CD4-positive, alpha-beta T cell (primary cell): ENCODE measurements at regions of chr1 and their contacts with region 1.

Region 1: GRCh38 chr1:182604169-182605164 is at the start of gene RGS16:
- DNase-seq: peak; percentile 77 to 96 (median 90)
- ATAC-seq: peak; percentile 88
- H3K4me3 ChIP-seq: peak within 1 kb of the TSS; percentile 58
- H3K4me3 Mint-ChIP-seq: peak within 1 kb of the TSS; percentile 83
- H3K27ac ChIP-seq: no peak within 1 kb of the TSS
- H3K27ac Mint-ChIP-seq: no peak within 1 kb of the TSS
- H3K4me1 ChIP-seq: peaks cover 36% of the 10 kb centered on the region
- H3K4me1 Mint-ChIP-seq: no peaks in the 10 kb centered on the region
- H3K27me3 ChIP-seq: no peaks in the 10 kb centered on the region
- H3K27me3 Mint-ChIP-seq: peaks cover 16% of the 10 kb centered on the region
- CTCF ChIP-seq: no peak
- total RNA-seq, gene RGS16: 16.3 to 16.4 TPM

Region 2: DNA sequence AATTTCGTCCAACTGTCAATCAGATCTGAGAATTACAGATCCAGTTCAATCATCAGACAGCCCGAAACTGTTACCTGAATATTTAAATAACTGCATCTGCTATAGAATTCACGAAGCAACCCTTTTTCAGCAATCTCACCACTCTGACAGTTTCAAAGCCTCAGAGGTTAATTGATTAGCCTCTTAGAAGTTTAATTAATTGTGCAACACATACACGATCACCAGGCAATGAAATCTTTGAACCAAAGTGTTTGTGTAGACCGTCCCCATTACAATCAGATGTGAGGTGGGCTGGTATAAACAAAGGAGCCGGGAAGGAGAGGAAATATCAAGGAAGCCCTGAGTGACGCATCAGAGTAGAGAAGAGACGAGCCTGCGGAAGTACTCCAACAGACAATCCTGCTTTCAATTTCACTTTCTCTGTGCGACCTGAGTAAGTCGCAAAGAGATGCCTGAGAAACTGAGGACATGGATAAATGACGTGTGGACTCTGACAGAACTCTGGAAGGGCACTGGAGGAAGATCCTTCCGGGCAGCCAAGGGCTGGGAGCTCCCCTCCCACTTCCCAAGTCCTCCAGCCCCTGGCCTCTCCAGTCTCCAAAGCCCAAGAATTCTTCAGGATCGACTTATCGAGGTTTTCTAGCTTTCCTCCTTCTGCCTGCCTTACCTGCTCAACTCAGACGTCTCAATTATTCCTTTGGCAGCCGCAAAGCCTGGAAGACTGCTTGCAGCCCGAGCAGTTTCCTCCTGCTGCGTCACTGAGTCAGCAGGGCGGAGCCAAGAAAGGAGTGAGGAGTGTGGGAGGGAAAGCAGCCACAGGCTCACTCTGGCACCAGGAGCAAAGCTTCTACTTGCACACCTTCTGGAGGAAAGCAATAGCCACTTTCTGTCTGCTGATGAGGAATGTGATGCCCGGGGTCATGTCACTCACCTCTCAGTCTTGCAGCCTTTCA is 15.7 kb before region 1 on chr1 and contains the start of gene RNASEL:
- CTCF ChIA-PET with region 1: interaction called, 13 read pairs
- POLR2A ChIA-PET with region 1: interaction called, 38 read pairs
- intact Hi-C with region 1: no loop called
- DNase-seq: peak; percentile 28 to 85 (median 54)
- ATAC-seq: peak; percentile 85
- H3K4me3 ChIP-seq: peak within 1 kb of the TSS; percentile 83
- H3K4me3 Mint-ChIP-seq: peak within 1 kb of the TSS; percentile 95
- H3K27ac ChIP-seq: peak within 1 kb of the TSS; percentile 89 to 97
- H3K27ac Mint-ChIP-seq: peak within 1 kb of the TSS; percentile 99
- H3K4me1 ChIP-seq: peaks cover 28% of the 10 kb centered on the region
- H3K4me1 Mint-ChIP-seq: peaks cover 52% of the 10 kb centered on the region
- H3K27me3 ChIP-seq: no peaks in the 10 kb centered on the region
- H3K27me3 Mint-ChIP-seq: no peaks in the 10 kb centered on the region
- CTCF ChIP-seq: no peak
- total RNA-seq, gene RNASEL: 3.5 to 3.7 TPM

Region 3: DNA sequence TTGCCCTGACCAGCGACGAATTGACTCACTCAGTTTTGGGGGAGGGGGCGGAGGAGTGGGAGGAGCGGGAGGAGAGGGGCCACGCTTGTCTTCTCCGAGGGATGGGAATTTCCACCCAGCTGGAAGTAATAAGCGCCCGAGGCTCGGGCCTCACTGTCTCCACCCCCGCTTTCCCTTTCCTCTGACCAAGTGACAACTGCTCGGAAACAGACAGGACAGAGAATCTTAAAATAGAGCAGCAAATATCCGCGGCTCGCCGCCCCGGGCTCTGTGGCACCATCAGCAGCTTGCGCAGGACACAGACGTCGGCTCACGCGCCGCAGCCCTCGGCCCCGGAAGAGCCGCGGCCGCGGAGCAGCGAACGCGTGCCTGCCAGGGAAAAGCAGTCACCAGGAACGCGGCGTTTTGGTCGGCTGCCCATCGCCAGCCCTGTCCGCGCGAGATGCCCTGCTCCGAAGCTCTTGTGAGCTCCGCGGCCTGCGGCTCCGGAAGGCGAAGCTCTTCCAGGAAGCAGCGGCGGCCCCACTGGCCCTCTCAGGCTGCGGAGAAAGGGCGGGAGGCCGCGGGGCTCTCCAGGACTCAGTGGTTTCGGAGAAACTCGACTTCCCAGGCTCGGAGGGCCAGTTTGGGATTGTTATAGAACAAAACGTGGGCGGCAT is 10.5 kb after region 1 on chr1:
- CTCF ChIA-PET with region 1: interaction called, 14 read pairs
- POLR2A ChIA-PET with region 1: interaction called, 55 read pairs
- intact Hi-C with region 1: loop called in 1 of 2 experiments (anchors 1 kb)
- DNase-seq: peak in 11 of 14 experiments; percentile 17 to 78 (median 43)
- ATAC-seq: no peak
- H3K4me3 ChIP-seq: peak overlapping the region; percentile 57
- H3K4me3 Mint-ChIP-seq: peak overlapping the region; percentile 84
- H3K27ac ChIP-seq: no peak overlapping the region
- H3K27ac Mint-ChIP-seq: peak overlapping the region; percentile 82
- H3K4me1 ChIP-seq: peaks cover 36% of the 10 kb centered on the region
- H3K4me1 Mint-ChIP-seq: peaks cover 32% of the 10 kb centered on the region
- H3K27me3 ChIP-seq: peaks cover 14 to 23% of the 10 kb centered on the region in 2 experiments
- H3K27me3 Mint-ChIP-seq: peaks cover 49% of the 10 kb centered on the region
- CTCF ChIP-seq: no peak

Region 4: GRCh38 chr1:182707122-182707521 is 102.7 kb after region 1 on chr1:
- CTCF ChIA-PET with region 1: no interaction called
- POLR2A ChIA-PET with region 1: no interaction called
- intact Hi-C with region 1: no loop called
- DNase-seq: no peak
- ATAC-seq: no peak
- H3K4me3 ChIP-seq: no peak overlapping the region
- H3K4me3 Mint-ChIP-seq: no peak overlapping the region
- H3K27ac ChIP-seq: no peak overlapping the region
- H3K27ac Mint-ChIP-seq: no peak overlapping the region
- H3K4me1 ChIP-seq: no peaks in the 10 kb centered on the region
- H3K4me1 Mint-ChIP-seq: no peaks in the 10 kb centered on the region
- H3K27me3 ChIP-seq: no peaks in the 10 kb centered on the region
- H3K27me3 Mint-ChIP-seq: no peaks in the 10 kb centered on the region
- CTCF ChIP-seq: no peak

Region 5: DNA sequence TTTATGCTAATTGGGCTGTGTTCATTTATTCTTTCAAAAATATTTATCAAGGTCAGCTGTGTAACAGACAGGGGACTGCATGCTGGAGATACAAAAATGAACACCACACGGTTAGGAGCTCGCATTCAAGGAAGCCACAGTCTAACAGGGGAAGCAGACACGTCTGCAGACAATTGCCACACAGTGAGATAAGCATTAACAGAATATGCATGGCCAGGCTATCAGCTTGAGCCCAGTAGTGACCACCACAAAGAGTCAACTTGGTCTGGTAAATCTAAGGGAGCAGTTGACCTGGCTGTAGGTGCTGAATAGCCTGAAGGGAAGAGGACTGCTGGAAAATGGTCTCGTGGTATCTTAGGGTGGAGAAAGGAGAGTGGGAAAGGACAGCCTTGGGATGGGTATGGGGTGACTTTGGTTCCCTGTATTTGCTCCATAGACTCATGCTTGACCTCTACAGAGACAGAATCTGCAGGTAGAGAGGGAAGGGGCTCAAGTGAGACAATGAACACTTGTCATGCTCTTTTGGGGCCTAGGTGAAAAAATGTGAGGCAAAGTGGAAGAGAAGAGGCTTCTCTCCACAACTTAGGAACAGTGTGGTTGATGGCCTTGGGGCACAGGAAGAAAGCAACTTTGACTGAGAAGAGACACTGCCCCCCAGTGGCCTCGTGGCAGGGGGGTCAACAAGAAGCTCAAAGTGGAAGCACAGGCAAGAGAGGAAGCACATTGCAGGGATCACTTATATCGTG is 177.5 kb after region 1 on chr1:
- CTCF ChIA-PET with region 1: interaction called, 370 read pairs
- POLR2A ChIA-PET with region 1: interaction called, 8 read pairs
- intact Hi-C with region 1: loop called (anchors 1 kb)
- DNase-seq: peak; percentile 45 to 82 (median 62)
- ATAC-seq: peak; percentile 83
- H3K4me3 ChIP-seq: no peak overlapping the region
- H3K4me3 Mint-ChIP-seq: no peak overlapping the region
- H3K27ac ChIP-seq: no peak overlapping the region
- H3K27ac Mint-ChIP-seq: no peak overlapping the region
- H3K4me1 ChIP-seq: peaks cover 5% of the 10 kb centered on the region
- H3K4me1 Mint-ChIP-seq: peaks cover 4% of the 10 kb centered on the region
- H3K27me3 ChIP-seq: peaks cover 0 to 2% of the 10 kb centered on the region in 2 experiments
- H3K27me3 Mint-ChIP-seq: no peaks in the 10 kb centered on the region
- CTCF ChIP-seq: peak; percentile 58

Region 6: DNA sequence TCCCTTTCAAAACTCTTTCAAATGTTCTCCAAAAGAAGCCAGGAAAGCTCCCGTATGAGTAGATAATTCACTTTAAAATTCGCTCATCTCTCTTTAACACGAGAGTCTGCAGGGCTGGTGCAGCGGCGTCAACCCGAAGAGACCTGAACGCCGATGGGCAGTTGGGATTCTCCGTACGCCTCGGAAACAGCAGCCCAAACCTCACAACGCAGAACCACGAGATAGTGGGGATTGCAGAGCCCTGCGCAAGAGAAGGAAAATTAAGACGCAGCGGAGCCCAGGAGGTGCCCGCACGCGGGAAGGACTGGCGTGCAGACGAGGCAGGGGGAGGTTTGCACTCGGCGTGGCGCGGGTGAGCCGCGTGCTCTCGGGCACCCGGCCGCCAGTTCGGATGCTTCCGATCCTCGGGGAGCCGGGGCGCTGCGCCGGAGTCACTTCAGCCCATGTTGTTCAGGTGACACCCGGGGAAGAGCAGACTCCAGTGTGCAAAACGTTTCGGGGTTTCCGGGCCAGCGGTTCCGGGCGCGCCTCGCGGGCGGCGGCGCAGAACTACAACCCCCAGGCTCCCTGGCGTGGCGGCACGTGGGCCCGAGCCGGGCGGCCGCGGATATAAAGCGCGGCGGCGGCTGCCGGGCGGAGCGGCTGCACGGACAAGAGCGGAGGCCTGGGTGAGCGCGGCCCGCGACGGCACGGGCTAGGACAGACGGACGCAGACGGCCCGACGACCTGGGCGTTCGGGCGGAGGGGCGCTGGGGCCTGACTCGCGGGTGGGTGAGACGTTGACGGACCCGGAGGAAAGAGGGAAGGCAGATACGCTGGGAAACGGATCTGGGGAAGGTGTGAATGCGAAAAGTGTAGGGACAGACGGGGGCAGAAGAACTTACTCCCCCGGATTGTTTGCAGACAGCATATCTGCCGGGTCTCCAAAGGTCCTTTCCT is 184.9 kb after region 1 on chr1 and contains the start of gene NPL:
- CTCF ChIA-PET with region 1: interaction called, 370 read pairs
- POLR2A ChIA-PET with region 1: interaction called, 8 read pairs
- intact Hi-C with region 1: loop called in 1 of 2 experiments (anchors 1 kb)
- DNase-seq: peak; percentile 71 to 94 (median 82)
- ATAC-seq: peak; percentile 97
- H3K4me3 ChIP-seq: peak within 1 kb of the TSS; percentile 66
- H3K4me3 Mint-ChIP-seq: peak within 1 kb of the TSS; percentile 96
- H3K27ac ChIP-seq: peak within 1 kb of the TSS in 1 of 2 donors; percentile 51
- H3K27ac Mint-ChIP-seq: peak within 1 kb of the TSS; percentile 77
- H3K4me1 ChIP-seq: peaks cover 10% of the 10 kb centered on the region
- H3K4me1 Mint-ChIP-seq: peaks cover 7% of the 10 kb centered on the region
- H3K27me3 ChIP-seq: no peaks in the 10 kb centered on the region
- H3K27me3 Mint-ChIP-seq: no peaks in the 10 kb centered on the region
- CTCF ChIP-seq: no peak
- total RNA-seq, gene NPL: 0.63 to 1.7 TPM

Region 7: GRCh38 chr1:183635606-183636333 is 1031.3 kb after region 1 on chr1 and contains the start of gene ARPC5:
- CTCF ChIA-PET with region 1: no interaction called
- POLR2A ChIA-PET with region 1: no interaction called
- intact Hi-C with region 1: loop called in 1 of 2 experiments (anchors 5 kb)
- DNase-seq: peak; percentile 91 to 99 (median 94)
- ATAC-seq: peak; percentile 88
- H3K4me3 ChIP-seq: peak within 1 kb of the TSS; percentile 93
- H3K4me3 Mint-ChIP-seq: peak within 1 kb of the TSS; percentile 100
- H3K27ac ChIP-seq: peak within 1 kb of the TSS; percentile 61 to 86
- H3K27ac Mint-ChIP-seq: peak within 1 kb of the TSS; percentile 94
- H3K4me1 ChIP-seq: peaks cover 17% of the 10 kb centered on the region
- H3K4me1 Mint-ChIP-seq: peaks cover 51% of the 10 kb centered on the region
- H3K27me3 ChIP-seq: no peaks in the 10 kb centered on the region
- H3K27me3 Mint-ChIP-seq: no peaks in the 10 kb centered on the region
- CTCF ChIP-seq: no peak
- total RNA-seq, gene ARPC5: 21.4 to 23.0 TPM